Transverse colon (tissue), 4 donors: ENCODE measurements at regions of chr2 and their contacts with region 1.

Region 1: DNA sequence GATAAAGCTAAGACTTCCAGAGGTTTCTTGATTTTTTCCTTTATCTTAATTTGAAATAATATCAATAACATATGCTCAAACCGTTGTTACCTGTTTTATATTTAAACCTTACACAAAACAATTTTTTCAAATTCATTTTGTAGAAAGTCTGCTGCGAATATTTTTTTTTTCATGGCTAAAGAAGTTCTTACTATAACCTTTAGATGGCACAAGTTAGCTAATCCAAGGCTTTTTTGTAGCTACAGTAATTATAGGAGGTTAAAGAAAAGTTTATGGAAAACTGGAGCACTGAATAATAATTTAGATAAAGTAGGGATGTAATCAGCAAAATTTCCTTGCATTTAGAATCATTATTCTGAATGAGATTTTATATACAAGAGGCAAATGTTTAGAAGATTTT is 78.0 kb upstream of the PNPT1 start:
- DNase-seq: no peak
- H3K4me3 ChIP-seq: no peak overlapping the region
- H3K27ac ChIP-seq: no peak overlapping the region
- H3K4me1 ChIP-seq: no peaks in the 10 kb centered on the region
- H3K27me3 ChIP-seq: no peaks in the 10 kb centered on the region
- CTCF ChIP-seq: peak; percentile 51 to 62 (median 53)
- EP300 ChIP-seq: no peak
- POLR2A ChIP-seq: no peak

Region 2: DNA sequence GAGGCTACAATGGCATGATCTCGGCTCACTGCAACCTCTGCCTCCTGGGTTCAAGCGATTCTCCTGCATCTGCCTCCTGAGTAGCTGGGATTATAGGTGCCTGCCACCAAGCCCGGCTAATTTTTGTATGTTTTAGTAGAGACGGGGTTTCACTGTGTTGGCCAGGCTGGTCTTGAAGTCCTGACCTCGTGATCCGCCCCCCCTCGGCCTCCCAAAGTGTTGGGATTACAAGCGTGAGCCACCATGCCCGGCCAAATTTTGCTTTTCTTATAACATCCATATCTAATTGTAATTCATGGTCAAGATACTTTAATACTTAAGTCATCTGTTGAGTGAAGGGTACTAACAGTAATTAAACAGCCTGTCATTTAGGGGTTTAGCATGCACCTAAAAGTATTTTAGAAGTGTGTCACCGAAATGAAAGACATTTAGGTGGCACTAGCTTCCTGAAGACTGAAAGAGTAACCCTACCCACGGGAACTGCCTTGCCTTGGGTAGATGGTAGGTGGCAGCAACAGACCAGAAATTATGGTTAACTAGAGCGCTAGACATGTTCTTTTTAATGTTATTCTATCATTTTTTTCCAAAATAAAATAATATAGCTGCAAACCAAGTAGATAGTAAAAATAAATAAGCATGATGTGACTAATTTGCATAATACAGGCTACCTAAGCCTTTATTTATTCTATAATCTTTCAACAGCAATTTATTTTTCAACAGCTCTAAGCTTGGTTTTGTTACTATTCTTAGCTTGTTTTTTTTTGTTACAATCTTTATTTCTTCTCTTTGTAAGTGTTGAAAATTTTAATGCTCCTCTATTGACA is 1664.8 kb before region 1 on chr2:
- in situ Hi-C with region 1: no loop called
- intact Hi-C with region 1: no loop called
- DNase-seq: peak; percentile 36
- H3K4me3 ChIP-seq: no peak overlapping the region
- H3K27ac ChIP-seq: no peak overlapping the region
- H3K4me1 ChIP-seq: peaks cover 0 to 6% (median 2%) of the 10 kb centered on the region in 4 donors
- H3K27me3 ChIP-seq: no peaks in the 10 kb centered on the region
- CTCF ChIP-seq: peak; percentile 44 to 62 (median 52)
- EP300 ChIP-seq: no peak
- POLR2A ChIP-seq: no peak

Region 3: DNA sequence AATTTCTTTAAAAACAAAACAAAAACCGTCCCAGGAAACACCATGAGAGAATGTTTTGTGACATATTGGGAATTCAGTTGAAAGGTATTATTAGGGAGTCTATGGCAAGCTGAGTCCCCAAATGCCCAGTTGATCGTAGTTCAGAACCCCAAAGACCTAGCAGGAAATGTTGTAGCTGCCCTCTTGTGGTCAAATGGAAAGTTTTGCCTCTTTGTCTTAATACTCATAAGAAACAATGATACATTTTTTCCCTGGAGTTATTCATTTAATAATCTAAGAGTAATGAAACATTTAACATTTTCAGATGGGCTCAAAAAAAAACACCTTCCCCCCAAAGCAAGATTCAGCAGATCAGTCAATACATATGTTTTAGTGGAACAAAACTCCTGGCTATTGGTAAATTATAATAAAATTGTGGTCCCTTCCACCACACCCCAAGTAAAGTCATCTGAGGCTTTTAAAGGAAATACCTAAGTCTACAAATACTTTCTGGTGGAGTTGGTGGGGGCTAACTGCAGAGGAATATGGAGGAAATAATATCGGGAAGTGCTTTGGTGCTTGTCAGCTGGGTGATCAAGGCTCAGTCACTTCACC is 189.8 kb after region 1 on chr2:
- in situ Hi-C with region 1: loop called in 3 of 4 experiments (anchors 25 kb)
- intact Hi-C with region 1: no loop called
- DNase-seq: no peak
- H3K4me3 ChIP-seq: no peak overlapping the region
- H3K27ac ChIP-seq: no peak overlapping the region
- H3K4me1 ChIP-seq: peaks cover 0 to 9% (median 3%) of the 10 kb centered on the region in 4 donors
- H3K27me3 ChIP-seq: no peaks in the 10 kb centered on the region
- CTCF ChIP-seq: peak; percentile 38 to 54 (median 49)
- EP300 ChIP-seq: no peak
- POLR2A ChIP-seq: no peak